HCT116 (cell line): ENCODE measurements at regions of chr6 and their contacts with region 1.

Region 1: GRCh38 chr6:99868074-99868702 is 125.8 kb downstream of the MCHR2 start:
- DNase-seq: peak; percentile 51
- ATAC-seq: peak; percentile 94
- H3K4me3 ChIP-seq: peak overlapping the region; percentile 9 to 23; a peak in 2 of 4 replicates
- H3K27ac ChIP-seq: no peak overlapping the region
- H3K4me1 ChIP-seq: peaks cover 0 to 4% of the 10 kb centered on the region in 2 experiments; a peak in 1 of 4 replicates
- H3K27me3 ChIP-seq: no peaks in the 10 kb centered on the region
- CTCF ChIP-seq: peak; percentile 74 to 90 (median 78)
- POLR2A ChIP-seq: no peak
- RAD21 ChIP-seq: peak; percentile 90

Region 2: GRCh38 chr6:99905209-99906106 is 37.3 kb after region 1 on chr6:
- CTCF ChIA-PET with region 1: interaction called, 17 read pairs
- POLR2A ChIA-PET with region 1: no interaction called
- RAD21 ChIA-PET with region 1: interaction called in 1 of 2 experiments, 3 read pairs
- intact Hi-C with region 1: no loop called
- DNase-seq: peak; percentile 60
- ATAC-seq: peak; percentile 98
- H3K4me3 ChIP-seq: no peak overlapping the region
- H3K27ac ChIP-seq: no peak overlapping the region
- H3K4me1 ChIP-seq: no peaks in the 10 kb centered on the region
- H3K27me3 ChIP-seq: no peaks in the 10 kb centered on the region
- CTCF ChIP-seq: peak; percentile 70 to 97 (median 83)
- POLR2A ChIP-seq: no peak
- RAD21 ChIP-seq: peak; percentile 76

Region 3: GRCh38 chr6:99960027-99960426 is 91.8 kb after region 1 on chr6:
- CTCF ChIA-PET with region 1: no interaction called
- POLR2A ChIA-PET with region 1: no interaction called
- RAD21 ChIA-PET with region 1: no interaction called
- intact Hi-C with region 1: no loop called
- DNase-seq: no peak
- ATAC-seq: no peak
- H3K4me3 ChIP-seq: no peak overlapping the region
- H3K27ac ChIP-seq: no peak overlapping the region
- H3K4me1 ChIP-seq: no peaks in the 10 kb centered on the region
- H3K27me3 ChIP-seq: no peaks in the 10 kb centered on the region
- CTCF ChIP-seq: no peak
- POLR2A ChIP-seq: no peak
- RAD21 ChIP-seq: no peak

Region 4: GRCh38 chr6:100099189-100100074 is 231.2 kb after region 1 on chr6:
- CTCF ChIA-PET with region 1: interaction called, 88 read pairs
- POLR2A ChIA-PET with region 1: no interaction called
- RAD21 ChIA-PET with region 1: interaction called, 3 to 6 read pairs
- intact Hi-C with region 1: loop called (anchors 1 kb)
- DNase-seq: peak; percentile 16
- ATAC-seq: peak; percentile 70
- H3K4me3 ChIP-seq: no peak overlapping the region
- H3K27ac ChIP-seq: no peak overlapping the region
- H3K4me1 ChIP-seq: no peaks in the 10 kb centered on the region
- H3K27me3 ChIP-seq: no peaks in the 10 kb centered on the region
- CTCF ChIP-seq: peak; percentile 37 to 79 (median 69); a peak in 5 of 6 replicates
- POLR2A ChIP-seq: no peak
- RAD21 ChIP-seq: peak; percentile 63

Region 5: GRCh38 chr6:100479179-100480035 is 611.2 kb after region 1 on chr6:
- CTCF ChIA-PET with region 1: no interaction called
- POLR2A ChIA-PET with region 1: no interaction called
- RAD21 ChIA-PET with region 1: no interaction called
- intact Hi-C with region 1: loop called (anchors 5 kb)
- DNase-seq: peak; percentile 54
- ATAC-seq: peak; percentile 81
- H3K4me3 ChIP-seq: no peak overlapping the region
- H3K27ac ChIP-seq: no peak overlapping the region
- H3K4me1 ChIP-seq: peaks cover 0 to 8% of the 10 kb centered on the region in 2 experiments; a peak in 2 of 4 replicates
- H3K27me3 ChIP-seq: no peaks in the 10 kb centered on the region
- CTCF ChIP-seq: peak; percentile 61 to 83 (median 82)
- POLR2A ChIP-seq: no peak
- RAD21 ChIP-seq: peak; percentile 90

Region 6: DNA sequence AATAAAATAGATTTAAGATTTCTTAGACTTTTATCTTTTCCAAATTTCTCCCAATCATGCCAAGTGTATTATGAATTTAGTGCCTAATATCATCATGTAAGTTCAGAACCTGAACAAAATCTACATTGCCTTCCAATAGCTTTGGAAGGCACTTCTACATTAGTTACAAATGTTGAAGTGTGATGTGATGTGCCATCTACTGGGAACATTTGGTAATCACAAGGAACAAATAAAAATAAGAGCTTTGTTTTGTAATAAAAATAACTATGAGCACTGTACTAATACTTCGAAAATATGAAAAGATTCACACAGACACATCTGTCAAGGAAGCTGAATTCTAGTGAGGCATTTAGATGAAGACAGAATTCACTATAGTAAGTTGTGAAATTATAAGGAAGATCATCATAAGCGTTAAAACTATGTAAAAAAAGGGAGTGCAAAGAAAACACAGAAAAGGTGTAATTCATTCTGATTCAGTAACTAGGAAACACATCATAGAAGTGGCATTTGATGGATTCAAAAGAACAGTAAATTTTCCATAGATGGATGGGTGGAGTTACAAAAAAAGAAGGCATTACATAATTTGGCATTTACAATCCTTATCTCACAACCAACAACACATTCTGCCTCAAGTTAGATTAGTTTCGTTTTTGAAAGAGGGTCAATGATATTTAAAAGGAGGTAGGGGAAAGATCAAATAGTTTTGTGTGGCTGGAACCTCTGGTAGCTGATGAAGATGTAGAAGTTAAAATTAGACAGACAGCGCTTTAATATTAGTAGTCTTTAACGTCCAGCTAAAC is 851.9 kb after region 1 on chr6:
- CTCF ChIA-PET with region 1: interaction called, 11 read pairs
- POLR2A ChIA-PET with region 1: no interaction called
- RAD21 ChIA-PET with region 1: no interaction called
- intact Hi-C with region 1: no loop called
- DNase-seq: peak; percentile 8
- ATAC-seq: peak; percentile 61
- H3K4me3 ChIP-seq: no peak overlapping the region
- H3K27ac ChIP-seq: no peak overlapping the region
- H3K4me1 ChIP-seq: no peaks in the 10 kb centered on the region
- H3K27me3 ChIP-seq: no peaks in the 10 kb centered on the region
- CTCF ChIP-seq: peak; percentile 20 to 60 (median 47); a peak in 5 of 6 replicates
- POLR2A ChIP-seq: no peak
- RAD21 ChIP-seq: peak; percentile 37; the same call in 1 of the 2 replicates